Panc1 (cell line): ENCODE measurements at regions of chr1 and their contacts with region 1.

Region 1: DNA sequence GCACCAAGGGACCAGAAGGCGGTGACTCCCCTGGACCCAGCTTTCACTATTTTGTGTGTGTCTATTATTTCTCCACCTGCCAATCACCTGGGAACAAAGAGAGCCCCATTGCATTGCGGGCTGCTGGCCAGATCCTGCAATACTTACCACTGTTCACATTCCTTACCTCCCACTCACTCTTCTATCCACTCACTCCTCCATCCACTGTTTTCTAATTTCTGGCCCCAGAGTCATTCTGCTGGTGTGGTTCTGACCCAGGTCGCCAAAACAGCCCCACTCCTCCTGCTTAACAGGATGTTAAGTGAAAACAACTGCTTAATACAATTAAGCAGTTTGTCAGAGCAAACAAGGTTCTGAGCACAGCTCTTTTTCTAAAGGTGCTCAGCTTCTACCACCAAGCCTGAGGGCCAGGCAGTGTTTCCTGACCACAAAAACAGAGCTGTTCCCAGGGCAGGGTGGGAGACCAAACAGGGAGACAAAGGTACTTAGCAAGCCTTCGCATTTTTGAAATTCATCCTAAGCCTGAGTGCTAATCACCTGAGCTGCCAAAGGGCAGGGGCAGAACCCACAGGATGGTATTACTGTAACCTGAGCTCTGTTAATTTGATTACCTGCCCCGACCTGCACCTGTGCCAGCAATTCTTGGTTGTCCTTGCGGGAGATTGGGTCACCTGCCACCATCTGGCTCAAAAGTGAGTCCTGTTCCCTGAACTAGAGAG is 38.5 kb upstream of the EFCAB14 start:
- DNase-seq: no peak
- ATAC-seq: no peak
- H3K4me3 ChIP-seq: no peak overlapping the region
- H3K27ac ChIP-seq: no peak overlapping the region
- H3K4me1 ChIP-seq: no peaks in the 10 kb centered on the region
- H3K27me3 ChIP-seq: peaks cover 9% of the 10 kb centered on the region; the same call in 1 of the 2 replicates
- CTCF ChIP-seq: no peak

Region 2: DNA sequence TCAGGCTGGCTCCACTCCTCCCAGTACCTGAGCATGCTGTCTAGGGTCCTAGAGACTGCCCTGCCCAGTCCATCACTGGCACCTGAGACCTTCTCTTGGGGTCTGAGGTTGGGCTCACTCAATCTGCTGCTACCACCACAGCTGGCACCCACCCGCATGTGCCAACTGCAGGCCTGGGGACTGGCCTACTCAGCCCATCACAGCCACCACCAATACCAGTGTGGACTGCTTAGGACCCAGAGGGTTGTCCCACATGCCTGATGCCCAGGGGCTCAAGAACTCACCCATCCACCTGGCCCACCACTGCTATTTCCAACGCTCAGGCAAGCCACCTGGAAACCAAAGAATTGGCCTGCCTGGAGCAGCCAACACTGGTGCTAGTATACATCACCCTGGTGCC is 104.9 kb after region 1 on chr1:
- CTCF ChIA-PET with region 1: no interaction called
- POLR2A ChIA-PET with region 1: no interaction called
- in situ Hi-C with region 1: no loop called
- intact Hi-C with region 1: loop called (anchors 10 kb)
- DNase-seq: no peak
- ATAC-seq: no peak
- H3K4me3 ChIP-seq: no peak overlapping the region
- H3K27ac ChIP-seq: no peak overlapping the region
- H3K4me1 ChIP-seq: no peaks in the 10 kb centered on the region
- H3K27me3 ChIP-seq: no peaks in the 10 kb centered on the region; the same call in 1 of the 2 replicates
- CTCF ChIP-seq: no peak